Activated naive CD4-positive, alpha-beta T cell treated with anti-CD3 and anti-CD28 coated beads, Interleukin-2, amount 10 ng/mL, durations not matched to agents 7 days and 5 days (primary cell): ENCODE measurements at regions of chr11 and their contacts with region 1.

Region 1: DNA sequence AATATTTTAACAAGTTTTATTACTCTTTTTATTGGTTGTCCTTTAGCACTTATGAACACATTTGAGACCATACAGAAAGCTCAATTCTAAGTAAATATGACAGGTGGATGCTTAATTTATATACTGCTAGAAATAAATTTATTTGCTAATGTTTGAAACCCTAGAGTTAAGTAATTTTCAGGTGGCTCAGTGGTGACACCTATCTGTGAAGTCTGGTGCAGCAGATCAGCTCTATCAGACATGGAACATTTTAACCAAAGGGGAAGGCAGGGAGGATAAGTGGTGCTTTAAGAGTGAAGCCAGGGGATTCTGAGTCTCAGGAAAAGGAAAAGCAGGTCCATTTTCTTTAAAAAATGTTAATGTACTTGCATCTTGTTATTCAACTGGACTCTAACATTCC is 175.8 kb downstream of the DSCAML1 start:
- DNase-seq: peak; percentile 35
- H3K4me3 Mint-ChIP-seq: no peak overlapping the region
- H3K27ac Mint-ChIP-seq: no peak overlapping the region
- H3K4me1 Mint-ChIP-seq: no peaks in the 10 kb centered on the region
- H3K27me3 Mint-ChIP-seq: peaks cover 17% of the 10 kb centered on the region

Region 2: GRCh38 chr11:117300283-117300663 is 321.0 kb before region 1 on chr11:
- CTCF ChIA-PET with region 1: no interaction called
- DNase-seq: no peak
- H3K4me3 Mint-ChIP-seq: no peak overlapping the region
- H3K27ac Mint-ChIP-seq: no peak overlapping the region
- H3K4me1 Mint-ChIP-seq: no peaks in the 10 kb centered on the region
- H3K27me3 Mint-ChIP-seq: peaks cover 3% of the 10 kb centered on the region

Region 3: GRCh38 chr11:117610901-117611300 is 10.3 kb before region 1 on chr11:
- CTCF ChIA-PET with region 1: interaction called, 13 read pairs
- DNase-seq: no peak
- H3K4me3 Mint-ChIP-seq: no peak overlapping the region
- H3K27ac Mint-ChIP-seq: no peak overlapping the region
- H3K4me1 Mint-ChIP-seq: peaks cover 15% of the 10 kb centered on the region
- H3K27me3 Mint-ChIP-seq: peaks cover 22% of the 10 kb centered on the region

Region 4: DNA sequence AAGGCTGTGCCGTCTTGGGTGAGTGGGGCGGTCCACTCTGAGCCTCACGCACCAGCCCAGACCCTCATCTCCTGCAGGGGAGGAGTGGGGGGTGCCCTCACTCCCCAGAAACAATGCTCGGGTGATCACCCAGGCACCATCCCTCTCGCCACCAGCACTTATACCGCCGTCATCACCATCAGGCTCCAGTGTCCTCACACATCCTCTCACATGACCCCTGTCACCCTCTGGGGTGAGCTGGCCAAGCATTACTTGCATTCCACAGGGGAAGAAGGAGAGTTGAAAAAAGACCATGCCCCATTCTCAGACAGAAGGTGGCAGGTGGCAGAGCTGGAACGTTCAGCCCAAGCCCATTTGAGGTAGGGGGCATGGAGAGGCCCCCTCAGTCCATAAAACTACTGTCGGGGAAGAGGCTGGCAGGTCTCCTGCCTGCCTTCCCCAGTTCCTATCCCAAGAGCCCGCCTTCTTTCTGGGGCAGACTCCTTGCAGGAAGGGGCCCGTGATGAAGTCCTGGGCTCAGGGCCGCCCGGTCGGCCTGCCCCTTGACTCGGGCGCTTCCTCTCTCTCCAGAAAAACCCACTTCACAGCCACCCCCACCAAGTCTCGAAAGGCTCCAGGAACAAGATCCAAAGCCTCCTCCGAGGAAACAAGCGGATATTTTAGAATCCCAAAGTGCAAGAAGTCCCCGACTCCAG is 22.5 kb after region 1 on chr11:
- CTCF ChIA-PET with region 1: no interaction called
- DNase-seq: no peak
- H3K4me3 Mint-ChIP-seq: no peak overlapping the region
- H3K27ac Mint-ChIP-seq: no peak overlapping the region
- H3K4me1 Mint-ChIP-seq: no peaks in the 10 kb centered on the region
- H3K27me3 Mint-ChIP-seq: peaks cover 10% of the 10 kb centered on the region